ENCODE measurements at regions of chr6 and their contacts with region 1.

Region 1: GRCh38 chr6:139219271-139219729 is 72.5 kb downstream of the TXLNB start:
- DNase-seq: peak; percentile 52
- ATAC-seq: peak; percentile 100
- H3K4me3 Mint-ChIP-seq: peak overlapping the region; percentile 24
- H3K27ac Mint-ChIP-seq: peak overlapping the region; percentile 73
- H3K4me1 Mint-ChIP-seq: peaks cover 12% of the 10 kb centered on the region
- H3K27me3 Mint-ChIP-seq: no peaks in the 10 kb centered on the region
- CTCF ChIP-seq: no peak

Region 2: DNA sequence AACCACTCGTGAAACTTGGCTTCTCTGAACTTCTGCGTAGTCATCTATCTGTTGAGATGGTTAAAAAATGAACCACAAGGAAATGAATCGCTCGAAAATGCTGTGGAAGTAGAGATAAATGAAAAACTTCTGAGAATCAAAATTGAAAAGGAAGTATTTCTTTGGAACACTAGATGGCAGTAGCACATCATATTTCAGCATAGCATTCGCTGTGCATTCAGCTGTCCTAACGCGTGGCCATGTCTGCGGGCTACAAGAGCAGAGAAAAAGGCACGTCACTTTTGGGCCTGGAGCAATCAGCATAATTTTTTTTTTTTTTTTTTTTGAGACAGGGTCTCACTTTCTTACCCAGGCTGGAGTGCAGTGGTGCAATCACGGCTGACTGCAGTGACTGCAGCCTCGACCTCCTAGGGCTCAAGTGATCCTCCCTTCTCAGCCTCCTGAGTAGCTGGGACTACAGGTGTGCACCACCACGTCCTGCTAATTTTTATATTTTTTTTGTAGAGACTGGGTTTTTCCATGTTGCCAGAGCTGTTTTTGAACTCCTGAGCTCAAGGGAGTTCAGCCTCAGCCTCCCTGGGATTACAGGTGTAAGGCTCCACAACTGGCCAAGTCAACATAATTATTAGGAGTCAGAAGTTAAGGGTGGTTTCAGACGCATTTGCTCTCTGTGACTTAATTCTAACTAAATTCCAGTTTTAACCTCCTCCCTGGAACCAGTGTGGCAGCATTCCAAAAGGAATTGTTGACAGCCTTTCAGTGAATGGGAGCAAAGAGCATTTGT is 1103.2 kb before region 1 on chr6:
- CTCF ChIA-PET with region 1: no interaction called
- POLR2A ChIA-PET with region 1: no interaction called
- intact Hi-C with region 1: loop called (anchors 5 kb)
- DNase-seq: no peak
- ATAC-seq: peak; percentile 85
- H3K4me3 Mint-ChIP-seq: no peak overlapping the region
- H3K27ac Mint-ChIP-seq: no peak overlapping the region
- H3K4me1 Mint-ChIP-seq: peaks cover 6% of the 10 kb centered on the region
- H3K27me3 Mint-ChIP-seq: peaks cover 26% of the 10 kb centered on the region
- CTCF ChIP-seq: peak; percentile 61

Region 3: DNA sequence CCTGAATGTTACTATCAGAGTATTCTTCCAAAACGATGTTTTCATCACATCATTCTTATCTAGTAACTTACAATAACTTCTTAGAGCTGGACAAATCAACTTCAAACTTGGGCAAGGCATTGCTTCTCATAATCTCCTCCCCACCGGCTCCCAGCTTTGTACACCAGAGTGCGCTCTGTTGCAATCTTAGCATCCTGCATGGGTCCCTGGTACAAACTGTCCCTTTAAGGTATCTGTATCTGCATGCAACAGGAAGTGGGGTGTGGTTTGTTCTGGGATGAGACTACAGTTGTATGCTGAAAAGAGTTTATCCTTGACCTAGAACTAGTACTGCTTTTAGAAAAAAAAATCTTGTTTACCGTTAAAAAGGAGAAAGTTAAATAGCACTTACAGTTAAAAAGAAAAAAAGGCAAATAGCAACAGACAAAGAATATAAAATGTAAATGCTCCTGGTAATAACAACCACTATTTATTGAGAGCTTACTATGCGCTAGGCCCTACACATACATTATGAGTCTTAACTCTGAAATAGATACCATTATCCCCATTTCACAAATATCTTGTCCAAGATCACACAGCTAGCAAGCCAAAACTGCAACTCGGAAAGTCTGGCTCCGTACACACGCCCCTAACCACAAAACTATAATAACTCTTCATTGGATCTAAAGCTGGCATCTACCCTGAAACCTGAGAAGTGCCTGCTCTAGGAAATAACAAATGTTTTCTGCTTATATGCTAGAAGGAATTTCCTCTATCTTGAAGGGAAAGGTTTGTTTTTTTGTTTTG is 94.2 kb before region 1 on chr6:
- CTCF ChIA-PET with region 1: interaction called, 24 read pairs
- POLR2A ChIA-PET with region 1: no interaction called
- intact Hi-C with region 1: loop called (anchors 1 kb)
- DNase-seq: peak; percentile 42
- ATAC-seq: peak; percentile 100
- H3K4me3 Mint-ChIP-seq: peak overlapping the region; percentile 62
- H3K27ac Mint-ChIP-seq: peak overlapping the region; percentile 88
- H3K4me1 Mint-ChIP-seq: peaks cover 38% of the 10 kb centered on the region
- H3K27me3 Mint-ChIP-seq: no peaks in the 10 kb centered on the region
- CTCF ChIP-seq: no peak

Region 4: GRCh38 chr6:139243536-139243935 is 24.2 kb after region 1 on chr6:
- CTCF ChIA-PET with region 1: interaction called, 10 read pairs
- POLR2A ChIA-PET with region 1: no interaction called
- intact Hi-C with region 1: no loop called
- DNase-seq: no peak
- ATAC-seq: no peak
- H3K4me3 Mint-ChIP-seq: no peak overlapping the region
- H3K27ac Mint-ChIP-seq: no peak overlapping the region
- H3K4me1 Mint-ChIP-seq: no peaks in the 10 kb centered on the region
- H3K27me3 Mint-ChIP-seq: no peaks in the 10 kb centered on the region
- CTCF ChIP-seq: no peak

Region 5: DNA sequence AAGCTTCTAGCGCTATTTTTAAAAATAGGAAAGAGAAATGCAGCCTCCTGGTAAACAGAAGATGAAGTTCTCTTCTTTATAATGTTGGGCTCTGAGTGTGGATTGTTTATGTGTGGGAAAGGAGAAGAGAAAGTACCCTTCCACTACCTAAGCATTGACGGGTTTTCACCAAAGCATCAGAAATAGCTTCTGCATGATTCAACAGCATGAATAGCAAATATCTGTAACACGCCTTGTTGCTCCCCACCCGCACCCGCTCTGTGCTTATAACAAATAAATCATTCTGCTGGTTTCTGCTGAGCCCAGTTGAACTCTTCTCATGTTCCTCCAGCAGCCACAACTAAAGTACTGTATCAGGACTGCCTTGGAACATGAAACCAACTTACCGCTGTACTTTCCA is 51.8 kb after region 1 on chr6:
- CTCF ChIA-PET with region 1: interaction called, 11 read pairs
- POLR2A ChIA-PET with region 1: interaction called, 4 read pairs
- intact Hi-C with region 1: loop called (anchors 2 kb)
- DNase-seq: no peak
- ATAC-seq: peak; percentile 94
- H3K4me3 Mint-ChIP-seq: peak overlapping the region; percentile 75
- H3K27ac Mint-ChIP-seq: peak overlapping the region; percentile 96
- H3K4me1 Mint-ChIP-seq: peaks cover 80% of the 10 kb centered on the region
- H3K27me3 Mint-ChIP-seq: no peaks in the 10 kb centered on the region
- CTCF ChIP-seq: no peak

Region 6: GRCh38 chr6:139323511-139324300 is 104.4 kb after region 1 on chr6:
- CTCF ChIA-PET with region 1: interaction called, 13 read pairs
- POLR2A ChIA-PET with region 1: interaction called, 3 read pairs
- intact Hi-C with region 1: loop called (anchors 1 kb)
- DNase-seq: peak; percentile 56
- ATAC-seq: peak; percentile 62
- H3K4me3 Mint-ChIP-seq: peak overlapping the region; percentile 85
- H3K27ac Mint-ChIP-seq: peak overlapping the region; percentile 89
- H3K4me1 Mint-ChIP-seq: peaks cover 45% of the 10 kb centered on the region
- H3K27me3 Mint-ChIP-seq: no peaks in the 10 kb centered on the region
- CTCF ChIP-seq: no peak

Region 7: GRCh38 chr6:139996253-139996834 is 777.0 kb after region 1 on chr6:
- CTCF ChIA-PET with region 1: no interaction called
- POLR2A ChIA-PET with region 1: no interaction called
- intact Hi-C with region 1: loop called (anchors 5 kb)
- DNase-seq: no peak
- ATAC-seq: peak; percentile 42
- H3K4me3 Mint-ChIP-seq: no peak overlapping the region
- H3K27ac Mint-ChIP-seq: no peak overlapping the region
- H3K4me1 Mint-ChIP-seq: no peaks in the 10 kb centered on the region
- H3K27me3 Mint-ChIP-seq: no peaks in the 10 kb centered on the region
- CTCF ChIP-seq: no peak